Posterior vena cava (tissue), 2 donors: ENCODE measurements at regions of chr10 and their contacts with region 1.

Region 1: GRCh38 chr10:22174442-22174841 is 43.4 kb downstream of the EBLN1 start:
- DNase-seq: no peak

Region 2: GRCh38 chr10:21125471-21126228 is 1048.8 kb before region 1 on chr10:
- intact Hi-C with region 1: no loop called
- DNase-seq: no peak

Region 3: DNA sequence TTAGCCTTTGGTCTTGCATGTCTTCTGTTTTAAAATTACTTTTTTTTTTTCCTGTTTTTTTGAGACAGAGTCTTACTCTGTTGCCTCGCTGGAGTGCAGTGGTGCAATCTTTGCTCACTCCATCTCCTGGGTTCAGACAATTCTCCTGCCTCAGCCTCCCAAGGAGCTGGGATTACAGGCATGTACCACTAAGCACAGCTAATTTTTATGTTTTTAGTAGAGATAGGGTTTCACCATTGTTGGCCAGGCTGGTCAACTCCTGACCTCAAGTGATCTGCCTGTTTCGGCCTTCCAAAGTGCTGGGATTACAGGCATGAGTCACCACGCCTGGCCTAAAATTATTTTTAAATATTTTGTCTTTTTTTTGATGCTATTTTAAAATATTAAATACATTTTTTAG is 601.9 kb before region 1 on chr10:
- intact Hi-C with region 1: loop called in 1 of 2 experiments (anchors 5 kb)
- DNase-seq: no peak

Region 4: GRCh38 chr10:22193945-22194344 is 19.5 kb after region 1 on chr10:
- intact Hi-C with region 1: no loop called
- DNase-seq: no peak

Region 5: GRCh38 chr10:22259280-22259679 is 84.8 kb after region 1 on chr10:
- intact Hi-C with region 1: no loop called
- DNase-seq: no peak